PC-9 (cell line): ENCODE measurements at regions of chrX and their contacts with region 1.

Region 1: DNA sequence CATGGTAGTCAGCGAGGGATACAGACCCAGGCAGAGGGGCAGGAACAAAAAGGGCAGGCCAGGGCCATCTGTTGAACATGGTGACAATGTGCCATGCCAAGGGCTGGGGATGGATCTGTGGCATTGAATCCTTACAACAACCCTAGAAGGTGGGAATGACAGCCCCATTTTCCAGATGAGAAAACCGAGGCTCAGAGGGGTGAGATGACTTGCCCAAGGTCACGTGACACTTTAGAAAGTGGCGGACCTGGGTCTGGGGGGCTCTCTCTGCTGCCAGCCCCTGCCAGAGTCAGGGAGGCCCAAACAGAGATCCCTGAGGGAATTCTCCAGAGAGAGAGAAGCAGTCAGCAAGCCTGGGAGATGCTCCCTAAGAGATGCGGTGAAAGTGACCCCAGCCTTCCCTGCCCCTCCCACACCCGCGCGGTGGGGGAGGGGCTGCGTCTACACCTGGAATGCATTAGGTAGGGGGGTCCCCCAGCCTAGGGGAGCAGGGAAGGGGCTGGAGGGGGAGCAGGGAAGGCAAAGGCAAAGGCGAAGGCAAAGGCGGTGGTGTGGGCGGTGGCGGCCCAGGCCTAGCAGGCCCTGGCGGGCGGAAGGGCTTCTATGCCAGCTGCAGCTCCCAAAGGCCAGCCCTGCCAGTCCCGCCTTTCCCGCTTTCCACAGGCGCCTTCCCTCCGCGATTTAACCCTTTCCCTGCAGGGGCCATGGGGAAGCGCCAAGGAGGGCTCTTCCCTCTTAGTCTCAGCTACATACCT is 13.0 kb downstream of the FGD1 start:
- DNase-seq: no peak
- H3K4me3 ChIP-seq: no peak overlapping the region
- H3K27ac ChIP-seq: no peak overlapping the region
- H3K4me1 ChIP-seq: no peaks in the 10 kb centered on the region
- H3K27me3 ChIP-seq: no peaks in the 10 kb centered on the region
- CTCF ChIP-seq: no peak

Region 2: GRCh38 chrX:54495814-54496516 is 12.9 kb after region 1 on chrX and contains the start of gene FGD1:
- CTCF ChIA-PET with region 1: no interaction called
- POLR2A ChIA-PET with region 1: interaction called, 22 read pairs
- intact Hi-C with region 1: no loop called
- DNase-seq: peak in 1 of 2 experiments; percentile 77
- H3K4me3 ChIP-seq: peak within 1 kb of the TSS; percentile 64
- H3K27ac ChIP-seq: no peak within 1 kb of the TSS
- H3K4me1 ChIP-seq: peaks cover 4% of the 10 kb centered on the region; the same call in 1 of the 2 replicates
- H3K27me3 ChIP-seq: no peaks in the 10 kb centered on the region
- CTCF ChIP-seq: no peak
- total RNA-seq, gene FGD1: 20.3 and 23.5 TPM in 2 replicates

Region 3: DNA sequence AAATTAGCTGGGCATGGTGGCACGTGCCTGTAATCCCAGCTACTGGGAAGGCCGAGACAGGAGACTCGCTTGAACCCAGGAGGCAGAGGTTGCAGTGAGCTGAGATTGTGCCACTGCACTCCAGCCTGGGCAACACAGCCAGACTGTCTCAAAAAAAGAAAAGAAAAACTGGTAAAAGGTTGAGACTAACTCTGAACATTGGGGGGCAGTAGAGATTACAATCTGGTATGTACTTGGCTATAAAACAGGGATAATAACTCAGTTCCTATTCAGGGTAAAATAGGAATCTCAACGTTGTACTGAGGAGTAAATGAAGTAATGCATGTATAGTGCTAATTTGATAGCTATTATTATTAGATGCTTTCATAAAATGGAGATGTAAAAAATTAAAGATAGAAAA is 1736.7 kb after region 1 on chrX:
- CTCF ChIA-PET with region 1: no interaction called
- POLR2A ChIA-PET with region 1: interaction called, 43 read pairs
- intact Hi-C with region 1: no loop called
- DNase-seq: no peak
- H3K4me3 ChIP-seq: no peak overlapping the region
- H3K27ac ChIP-seq: no peak overlapping the region
- H3K4me1 ChIP-seq: no peaks in the 10 kb centered on the region
- H3K27me3 ChIP-seq: no peaks in the 10 kb centered on the region
- CTCF ChIP-seq: peak; percentile 47; the same call in 1 of the 2 replicates